ENCODE measurements at regions of chr3 and their contacts with region 1.

Region 1: GRCh38 chr3:29011441-29011840 is 269.4 kb upstream of the RBMS3 start:
- DNase-seq: no peak
- H3K4me3 ChIP-seq: no peak overlapping the region
- H3K27ac ChIP-seq: no peak overlapping the region
- H3K4me1 ChIP-seq: no peaks in the 10 kb centered on the region
- H3K27me3 ChIP-seq: no peaks in the 10 kb centered on the region
- CTCF ChIP-seq: no peak
- POLR2A ChIP-seq: no peak

Region 2: DNA sequence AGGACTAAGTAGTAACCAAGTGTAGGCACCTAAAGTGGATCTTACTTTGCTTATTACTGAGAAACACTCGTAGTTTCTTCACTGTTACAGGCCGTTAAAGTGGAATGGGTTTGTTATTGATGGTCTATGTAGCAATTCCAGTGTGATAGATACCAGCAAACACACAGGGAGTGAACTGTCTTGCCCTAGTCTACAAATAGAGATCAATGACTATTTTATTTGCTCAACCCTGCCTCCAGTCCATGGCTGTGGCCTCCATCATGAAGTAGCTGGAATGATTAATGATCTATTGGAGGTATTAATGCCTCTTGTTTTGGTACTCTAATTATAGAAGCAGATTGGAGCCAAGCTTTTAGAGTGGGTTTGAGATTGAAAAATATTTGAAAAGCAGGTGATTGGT is 300.1 kb before region 1 on chr3:
- intact Hi-C with region 1: loop called (anchors 5 kb)
- DNase-seq: no peak
- H3K4me3 ChIP-seq: no peak overlapping the region
- H3K27ac ChIP-seq: no peak overlapping the region
- H3K4me1 ChIP-seq: no peaks in the 10 kb centered on the region
- H3K27me3 ChIP-seq: no peaks in the 10 kb centered on the region
- CTCF ChIP-seq: no peak
- POLR2A ChIP-seq: no peak

Region 3: GRCh38 chr3:28958656-28959055 is 52.8 kb before region 1 on chr3:
- intact Hi-C with region 1: no loop called
- DNase-seq: no peak
- H3K4me3 ChIP-seq: no peak overlapping the region
- H3K27ac ChIP-seq: no peak overlapping the region
- H3K4me1 ChIP-seq: no peaks in the 10 kb centered on the region
- H3K27me3 ChIP-seq: no peaks in the 10 kb centered on the region
- CTCF ChIP-seq: no peak
- POLR2A ChIP-seq: no peak

Region 4: DNA sequence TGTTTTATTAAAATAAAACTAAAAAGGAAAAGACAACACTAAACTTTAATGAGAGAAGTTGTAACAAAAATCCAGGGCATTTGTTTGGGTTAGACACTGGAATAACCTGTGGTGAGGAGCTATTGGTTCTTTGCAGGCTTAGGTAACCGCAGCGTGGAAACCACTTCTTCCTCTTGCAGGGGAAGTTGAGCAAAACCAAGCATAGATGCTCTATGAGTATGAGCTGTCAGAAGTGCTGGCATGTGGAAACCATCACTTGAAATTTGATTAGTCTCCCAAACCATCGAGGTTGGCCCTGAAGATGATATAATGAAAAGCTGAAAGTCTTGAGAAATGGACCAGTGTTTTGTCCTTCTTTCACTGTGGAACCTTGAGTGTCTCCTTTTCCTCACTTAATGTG is 142.4 kb after region 1 on chr3:
- intact Hi-C with region 1: no loop called
- DNase-seq: no peak
- H3K4me3 ChIP-seq: no peak overlapping the region
- H3K27ac ChIP-seq: no peak overlapping the region
- H3K4me1 ChIP-seq: no peaks in the 10 kb centered on the region
- H3K27me3 ChIP-seq: no peaks in the 10 kb centered on the region
- CTCF ChIP-seq: no peak
- POLR2A ChIP-seq: no peak

Region 5: DNA sequence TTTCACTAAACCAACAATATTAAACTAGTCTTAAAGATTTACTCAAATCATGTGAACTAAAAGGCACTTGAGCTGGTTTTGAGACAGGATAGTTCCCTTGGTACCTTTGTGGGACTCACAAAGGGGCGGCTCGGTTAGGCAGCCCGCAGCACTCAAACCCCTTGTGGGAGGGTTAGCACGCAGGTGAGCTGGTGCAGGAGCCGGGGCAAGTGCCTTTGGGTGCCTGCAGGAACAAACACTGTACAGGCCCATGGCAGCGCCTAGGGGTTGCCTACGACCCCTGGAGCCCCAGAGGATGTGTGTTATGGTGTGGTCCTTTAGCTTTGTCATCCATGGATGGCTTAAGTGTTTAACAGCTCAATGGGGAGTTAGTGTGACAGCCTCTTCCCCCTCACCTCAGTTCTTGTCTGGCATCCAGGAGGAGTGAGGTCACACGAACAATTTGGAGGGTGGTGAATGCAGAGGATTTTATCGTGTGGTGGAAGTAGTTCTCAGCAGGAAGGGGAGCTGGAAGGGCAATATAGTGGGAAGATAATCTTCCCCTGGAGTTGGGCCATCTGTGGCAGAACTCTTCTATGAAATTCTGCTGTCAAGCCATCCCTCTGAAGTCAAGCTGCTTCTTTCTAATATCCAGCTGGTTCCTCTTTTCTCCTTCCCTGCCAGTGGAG is 740.3 kb after region 1 on chr3:
- intact Hi-C with region 1: no loop called
- DNase-seq: no peak
- H3K4me3 ChIP-seq: no peak overlapping the region
- H3K27ac ChIP-seq: no peak overlapping the region
- H3K4me1 ChIP-seq: no peaks in the 10 kb centered on the region
- H3K27me3 ChIP-seq: no peaks in the 10 kb centered on the region
- CTCF ChIP-seq: no peak
- POLR2A ChIP-seq: no peak